Transverse colon (tissue), 4 donors: ENCODE measurements at regions of chr2 and their contacts with region 1.

Region 1: DNA sequence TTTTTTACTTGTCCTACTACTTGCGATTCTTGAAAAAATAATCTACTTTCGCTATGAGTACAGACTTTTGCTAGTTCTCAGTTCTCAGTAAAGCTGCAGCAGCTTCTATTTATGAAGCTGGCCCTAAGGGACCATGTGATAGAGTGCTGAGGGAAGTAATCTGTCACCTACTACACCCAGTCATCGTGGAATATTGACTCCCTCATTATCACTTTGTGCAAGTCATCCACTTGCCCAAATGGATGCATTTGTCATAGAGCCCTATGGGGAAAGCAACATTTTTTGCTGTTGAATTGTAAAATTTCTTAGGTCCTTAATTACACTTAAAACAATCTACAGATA is 1919.8 kb downstream of the SUCLG1 start:
- DNase-seq: no peak
- H3K4me3 ChIP-seq: no peak overlapping the region
- H3K27ac ChIP-seq: no peak overlapping the region
- H3K4me1 ChIP-seq: no peaks in the 10 kb centered on the region
- H3K27me3 ChIP-seq: no peaks in the 10 kb centered on the region
- CTCF ChIP-seq: no peak
- EP300 ChIP-seq: no peak
- POLR2A ChIP-seq: no peak

Region 2: DNA sequence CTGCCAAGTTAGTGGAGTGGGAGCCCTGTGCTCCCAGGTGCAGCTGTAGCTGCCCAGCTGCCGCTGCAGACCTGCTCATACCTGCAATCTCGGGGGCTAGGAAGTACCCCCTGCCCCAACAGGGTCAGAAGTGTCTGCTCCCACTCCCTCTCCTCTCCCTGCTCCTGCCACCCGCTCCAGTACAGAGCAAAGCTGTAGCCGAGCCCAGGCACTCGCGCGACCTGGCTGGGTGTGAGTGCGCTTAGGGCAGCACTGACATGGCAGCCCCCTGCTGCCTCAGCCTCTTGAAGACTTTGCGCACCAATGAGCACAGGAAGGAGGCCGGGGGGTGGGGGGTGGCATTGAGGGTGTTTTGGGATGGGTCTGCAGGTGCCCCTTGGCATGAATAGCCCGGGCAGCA is 31.6 kb before region 1 on chr2:
- in situ Hi-C with region 1: no loop called
- intact Hi-C with region 1: no loop called
- DNase-seq: no peak
- H3K4me3 ChIP-seq: no peak overlapping the region
- H3K27ac ChIP-seq: no peak overlapping the region
- H3K4me1 ChIP-seq: no peaks in the 10 kb centered on the region
- H3K27me3 ChIP-seq: no peaks in the 10 kb centered on the region
- CTCF ChIP-seq: no peak
- EP300 ChIP-seq: no peak
- POLR2A ChIP-seq: no peak

Region 3: GRCh38 chr2:82857967-82858366 is 318.7 kb after region 1 on chr2:
- in situ Hi-C with region 1: no loop called
- intact Hi-C with region 1: no loop called
- DNase-seq: no peak
- H3K4me3 ChIP-seq: no peak overlapping the region
- H3K27ac ChIP-seq: no peak overlapping the region
- H3K4me1 ChIP-seq: no peaks in the 10 kb centered on the region
- H3K27me3 ChIP-seq: no peaks in the 10 kb centered on the region
- CTCF ChIP-seq: no peak
- EP300 ChIP-seq: no peak
- POLR2A ChIP-seq: no peak

Region 4: GRCh38 chr2:83342860-83343329 is 803.6 kb after region 1 on chr2:
- in situ Hi-C with region 1: no loop called
- intact Hi-C with region 1: loop called (anchors 5 kb)
- DNase-seq: no peak
- H3K4me3 ChIP-seq: no peak overlapping the region
- H3K27ac ChIP-seq: no peak overlapping the region
- H3K4me1 ChIP-seq: no peaks in the 10 kb centered on the region
- H3K27me3 ChIP-seq: no peaks in the 10 kb centered on the region
- CTCF ChIP-seq: no peak
- EP300 ChIP-seq: no peak
- POLR2A ChIP-seq: no peak